ENCODE measurements at regions of chr7 and their contacts with region 1.

Region 1: DNA sequence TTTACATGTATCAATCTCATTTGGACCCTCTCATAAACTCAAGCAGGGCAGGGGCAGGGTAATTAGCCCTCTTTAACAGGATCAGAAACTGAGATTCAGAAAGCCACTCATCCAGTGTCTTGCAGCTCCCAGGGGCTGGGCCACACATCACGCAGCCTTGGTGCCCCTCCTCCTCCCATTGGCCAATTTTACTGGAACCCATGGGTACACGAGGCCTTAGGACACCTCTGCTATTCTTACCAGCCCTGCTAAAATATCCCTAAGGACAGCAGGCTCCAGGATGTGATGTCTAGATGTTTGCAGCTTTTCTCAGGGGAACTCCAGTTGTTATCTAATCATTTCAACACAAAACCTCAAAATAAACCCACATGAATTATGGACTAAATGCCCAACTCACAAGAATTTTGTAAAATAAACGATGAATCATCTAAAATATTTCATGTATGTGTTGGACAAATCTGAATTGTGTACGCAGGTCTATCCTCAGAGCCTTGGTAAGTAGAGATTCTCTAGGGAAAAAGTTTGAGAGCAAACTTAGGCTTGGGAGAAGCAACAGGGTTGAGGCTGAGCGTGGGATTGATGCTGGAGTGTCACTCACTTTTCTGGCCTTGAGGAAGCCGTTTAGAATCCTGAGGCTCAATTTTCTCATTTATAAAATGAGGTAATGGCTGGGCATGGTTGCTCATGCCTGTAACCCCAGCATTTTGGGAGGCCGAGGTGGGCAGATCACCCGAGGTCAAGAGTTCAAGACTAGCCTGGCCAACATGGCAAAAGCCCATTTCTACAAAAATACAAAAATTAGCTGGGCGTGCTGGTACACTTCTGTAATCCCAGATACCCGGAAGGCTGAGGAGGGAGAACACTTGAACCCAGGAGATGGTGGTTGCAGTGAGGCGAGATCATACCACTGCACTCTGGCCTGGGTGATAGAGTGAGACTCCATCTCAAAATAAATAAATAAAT is 69.7 kb upstream of the TNS3 start:
- DNase-seq: peak; percentile 95
- H3K4me3 Mint-ChIP-seq: no peak overlapping the region
- H3K27ac Mint-ChIP-seq: peak overlapping the region; percentile 86
- H3K4me1 Mint-ChIP-seq: peaks cover 31% of the 10 kb centered on the region
- H3K27me3 Mint-ChIP-seq: no peaks in the 10 kb centered on the region
- CTCF ChIP-seq: no peak

Region 2: DNA sequence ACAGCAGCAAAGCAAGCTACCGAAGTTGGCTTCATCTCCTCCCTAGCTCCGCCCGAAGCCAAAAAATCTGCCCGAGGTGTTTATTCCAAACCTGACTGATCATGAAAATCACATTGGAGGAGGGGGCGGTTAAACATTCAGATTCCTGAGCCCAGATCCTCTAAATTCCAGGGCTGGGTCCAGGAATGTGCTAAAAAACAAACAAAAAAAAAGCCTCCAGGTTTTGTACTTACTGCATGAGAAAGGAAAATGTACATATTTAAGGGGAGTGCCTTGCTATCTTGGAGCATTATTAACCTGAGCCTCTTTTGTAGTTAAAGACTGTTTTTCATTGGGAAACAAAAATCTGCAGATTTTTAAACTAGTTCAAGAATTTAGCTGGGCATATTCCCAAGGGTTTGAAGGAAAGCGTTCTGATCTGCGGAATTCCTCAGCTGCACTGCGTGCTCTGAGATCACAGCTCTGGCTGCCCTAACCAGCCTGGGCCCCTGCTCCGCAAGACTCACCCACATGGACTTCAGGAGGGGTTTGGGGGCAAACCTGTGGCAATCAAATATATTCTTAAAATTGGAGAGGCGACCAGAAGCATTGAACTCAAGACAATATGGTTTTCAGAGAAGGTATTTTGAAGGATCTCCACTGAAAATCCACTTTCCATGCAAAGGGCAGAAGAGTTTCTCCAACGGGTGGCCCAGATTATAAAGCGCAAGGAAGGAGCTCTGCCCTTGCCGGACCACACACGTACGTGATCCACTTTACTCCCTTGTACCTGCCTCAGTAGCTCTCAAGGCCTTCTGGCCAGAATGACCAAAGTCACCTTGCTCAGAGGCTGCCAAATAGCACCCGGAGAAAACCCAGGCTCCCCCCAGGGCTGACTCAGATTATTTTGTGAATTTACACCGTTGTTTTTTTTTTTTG is 59.7 kb before region 1 on chr7:
- CTCF ChIA-PET with region 1: no interaction called
- POLR2A ChIA-PET with region 1: no interaction called
- intact Hi-C with region 1: loop called (anchors 5 kb)
- DNase-seq: no peak
- H3K4me3 Mint-ChIP-seq: no peak overlapping the region
- H3K27ac Mint-ChIP-seq: peak overlapping the region; percentile 78
- H3K4me1 Mint-ChIP-seq: peaks cover 35% of the 10 kb centered on the region
- H3K27me3 Mint-ChIP-seq: no peaks in the 10 kb centered on the region
- CTCF ChIP-seq: no peak

Region 3: GRCh38 chr7:47677667-47678111 is 26.1 kb after region 1 on chr7:
- CTCF ChIA-PET with region 1: interaction called, 3 read pairs
- POLR2A ChIA-PET with region 1: no interaction called
- intact Hi-C with region 1: loop called (anchors 2 kb)
- DNase-seq: peak; percentile 30
- H3K4me3 Mint-ChIP-seq: no peak overlapping the region
- H3K27ac Mint-ChIP-seq: peak overlapping the region; percentile 78
- H3K4me1 Mint-ChIP-seq: peaks cover 30% of the 10 kb centered on the region
- H3K27me3 Mint-ChIP-seq: no peaks in the 10 kb centered on the region
- CTCF ChIP-seq: no peak